ENCODE measurements at regions of chr2 and their contacts with region 1.

Region 1: DNA sequence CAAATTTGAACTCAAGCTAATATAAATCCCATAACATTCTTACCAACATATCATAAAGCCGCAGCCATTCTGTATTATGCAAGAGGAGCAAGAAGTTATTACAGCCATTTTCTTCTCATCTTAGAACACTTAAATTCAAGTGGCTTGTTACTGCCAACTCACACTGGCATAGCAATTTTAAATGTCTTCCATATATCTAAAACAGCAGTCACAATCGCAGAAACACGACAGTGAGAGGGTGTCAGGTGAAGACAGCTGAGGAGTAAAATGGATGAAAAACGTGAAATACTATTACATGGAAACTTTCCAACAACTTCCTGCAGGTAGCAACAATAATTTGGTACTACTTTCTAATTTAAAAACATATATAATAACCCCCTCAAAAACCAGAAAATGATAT is 17.9 kb downstream of the PPP3R1 start:
- DNase-seq: no peak
- H3K4me3 ChIP-seq: no peak overlapping the region
- H3K4me3 Mint-ChIP-seq: no peak overlapping the region
- H3K27ac Mint-ChIP-seq: no peak overlapping the region
- H3K4me1 ChIP-seq: peaks cover 8% of the 10 kb centered on the region; the same call in 1 of the 2 replicates
- H3K4me1 Mint-ChIP-seq: peaks cover 25% of the 10 kb centered on the region
- H3K27me3 ChIP-seq: no peaks in the 10 kb centered on the region
- H3K27me3 Mint-ChIP-seq: no peaks in the 10 kb centered on the region
- CTCF ChIP-seq: no peak

Region 2: GRCh38 chr2:68251187-68251854 is 16.9 kb after region 1 on chr2:
- CTCF ChIA-PET with region 1: no interaction called
- POLR2A ChIA-PET with region 1: no interaction called
- intact Hi-C with region 1: loop called (anchors 2 kb)
- DNase-seq: peak; percentile 79 to 80
- H3K4me3 ChIP-seq: peak overlapping the region; percentile 99
- H3K4me3 Mint-ChIP-seq: peak overlapping the region; percentile 92
- H3K27ac Mint-ChIP-seq: peak overlapping the region; percentile 97
- H3K4me1 ChIP-seq: 0 out of 2 replicates have a peak, but pooled peaks cover 17% of the 10 kb centered on the region
- H3K4me1 Mint-ChIP-seq: peaks cover 14% of the 10 kb centered on the region
- H3K27me3 ChIP-seq: no peaks in the 10 kb centered on the region
- H3K27me3 Mint-ChIP-seq: no peaks in the 10 kb centered on the region
- CTCF ChIP-seq: peak; percentile 64 to 72